ENCODE measurements at regions of chr12 and their contacts with region 1.

Region 1: GRCh38 chr12:111313833-111314259 is 55.0 kb downstream of the PHETA1 start:
- DNase-seq: peak; percentile 64 to 69 (median 69)
- ATAC-seq: peak; percentile 74
- H3K4me3 ChIP-seq: no peak overlapping the region
- H3K27ac ChIP-seq: no peak overlapping the region
- H3K4me1 ChIP-seq: no peaks in the 10 kb centered on the region
- H3K27me3 ChIP-seq: no peaks in the 10 kb centered on the region
- CTCF ChIP-seq: peak; percentile 81 to 96 (median 91)
- POLR2A ChIP-seq: no peak

Region 2: DNA sequence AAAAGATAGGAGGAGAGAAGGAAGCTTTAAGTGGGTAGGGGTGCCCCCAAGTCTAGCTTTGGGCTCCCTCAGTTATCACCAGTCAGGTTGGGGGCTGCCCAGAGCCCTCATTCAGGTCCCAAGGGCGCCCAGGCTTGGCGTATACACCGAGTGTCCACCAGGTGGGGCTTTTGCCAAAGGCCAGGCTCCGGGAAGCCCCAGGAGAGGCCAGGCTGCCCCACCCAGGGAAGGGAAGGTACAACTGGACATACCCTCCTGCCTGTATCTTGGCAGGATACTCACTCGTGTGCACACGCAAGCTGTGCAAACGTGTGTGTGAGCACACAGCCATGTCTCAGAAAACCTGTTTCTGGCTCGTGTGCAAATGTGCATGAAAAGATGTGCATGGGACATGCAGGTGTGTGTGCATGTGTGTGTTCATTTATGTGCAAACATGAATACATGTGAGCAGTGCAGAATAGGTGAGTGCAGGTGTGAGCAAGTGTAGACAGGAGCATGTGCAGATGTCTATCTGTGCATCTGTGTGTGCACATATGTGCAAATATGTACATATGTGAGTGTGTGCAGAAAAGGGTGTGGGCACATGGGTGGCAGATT is 289.5 kb before region 1 on chr12:
- intact Hi-C with region 1: loop called (anchors 10 kb)
- DNase-seq: peak; percentile 44 to 66 (median 60)
- ATAC-seq: peak; percentile 68
- H3K4me3 ChIP-seq: no peak overlapping the region
- H3K27ac ChIP-seq: no peak overlapping the region
- H3K4me1 ChIP-seq: no peaks in the 10 kb centered on the region
- H3K27me3 ChIP-seq: peaks cover 0 to 7% of the 10 kb centered on the region in 2 donors
- CTCF ChIP-seq: peak; percentile 56 to 82 (median 77)
- POLR2A ChIP-seq: no peak